ENCODE measurements at regions of chr1 and their contacts with region 1.

Region 1: DNA sequence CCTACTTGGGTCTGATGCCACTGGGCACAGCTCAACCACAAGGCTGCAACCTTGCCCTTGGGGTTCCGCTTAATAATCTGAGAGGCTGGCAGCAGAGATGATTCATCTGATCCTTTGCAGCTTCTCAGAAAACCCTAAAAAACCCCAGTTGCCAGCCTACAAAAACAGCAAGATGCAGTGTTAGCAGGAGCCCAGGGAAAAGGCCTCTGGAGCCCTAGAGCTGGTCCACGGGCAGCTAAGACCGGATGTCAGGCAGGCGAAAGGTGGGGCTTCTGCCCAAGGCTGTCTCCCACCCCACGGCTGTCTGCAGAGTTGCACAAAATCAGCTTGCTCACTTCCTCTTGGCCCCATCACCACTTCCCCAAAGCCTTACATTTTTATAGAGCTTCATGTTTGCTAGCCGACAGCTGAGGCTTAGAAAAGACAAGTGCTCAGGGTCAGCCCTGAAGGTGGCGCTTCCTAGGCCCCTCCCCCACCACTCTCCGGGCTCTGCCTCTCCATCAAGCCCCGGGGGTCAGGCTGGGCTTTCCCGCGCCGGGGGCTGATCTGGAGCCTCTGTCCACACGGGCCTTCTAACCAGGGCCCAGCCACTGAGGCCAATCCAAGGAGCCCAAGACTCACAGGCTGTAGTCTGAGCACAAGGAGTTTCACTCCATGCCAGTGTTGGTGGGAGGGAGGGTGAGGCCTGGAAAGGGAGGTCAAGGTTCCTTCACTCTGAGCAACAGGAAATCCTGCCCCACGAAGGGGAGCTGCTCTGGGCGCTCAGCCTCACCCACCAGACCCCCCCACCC is 4.2 kb upstream of the ADORA3 start:
- DNase-seq: peak; percentile 89
- ATAC-seq: peak; percentile 70
- H3K4me3 Mint-ChIP-seq: peak overlapping the region; percentile 67
- H3K27ac Mint-ChIP-seq: peak overlapping the region; percentile 94
- H3K4me1 Mint-ChIP-seq: peaks cover 58% of the 10 kb centered on the region
- H3K27me3 Mint-ChIP-seq: no peaks in the 10 kb centered on the region

Region 2: DNA sequence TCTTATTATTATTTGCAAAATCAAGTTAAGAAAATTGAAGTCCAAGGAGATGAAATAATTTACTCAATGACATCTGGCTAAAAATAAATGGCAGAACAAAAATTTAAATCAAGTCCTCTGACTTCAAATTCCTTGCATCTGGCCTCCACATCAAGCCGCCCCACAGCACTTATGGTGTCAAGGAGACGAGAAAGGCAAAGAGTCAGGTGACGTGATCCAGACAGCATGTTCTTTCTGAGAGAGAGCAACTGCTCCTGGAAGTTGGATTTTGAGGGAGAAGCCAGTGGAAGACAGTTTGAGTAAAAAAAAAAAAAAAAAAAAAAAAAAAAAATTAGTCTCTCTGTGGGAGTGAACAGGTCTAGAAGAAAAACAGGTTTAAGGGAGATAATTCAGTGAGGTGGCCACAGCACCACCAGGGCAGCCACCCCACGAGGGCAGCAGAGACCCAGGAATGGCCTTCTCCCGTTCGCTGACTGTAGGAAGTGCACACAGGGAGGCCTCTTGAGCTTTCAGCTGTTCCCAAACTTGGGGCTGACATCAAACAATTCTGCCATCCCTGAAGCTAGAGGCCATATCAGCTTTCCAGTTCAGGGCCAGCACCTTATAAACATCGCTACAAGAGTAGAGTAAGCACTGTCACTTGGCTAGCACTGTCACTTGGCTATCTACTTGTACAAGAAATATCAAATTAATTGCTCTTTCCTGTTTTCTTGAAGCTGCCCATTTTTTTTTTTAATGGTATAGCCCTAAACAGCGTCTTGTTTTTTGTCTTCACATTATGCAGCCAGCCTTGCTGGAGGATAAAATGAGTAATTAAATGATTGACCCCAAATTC is 26.0 kb before region 1 on chr1:
- CTCF ChIA-PET with region 1: interaction called, 39 read pairs
- DNase-seq: peak; percentile 73
- ATAC-seq: peak; percentile 74
- H3K4me3 Mint-ChIP-seq: no peak overlapping the region
- H3K27ac Mint-ChIP-seq: no peak overlapping the region
- H3K4me1 Mint-ChIP-seq: peaks cover 21% of the 10 kb centered on the region
- H3K27me3 Mint-ChIP-seq: peaks cover 35% of the 10 kb centered on the region

Region 3: DNA sequence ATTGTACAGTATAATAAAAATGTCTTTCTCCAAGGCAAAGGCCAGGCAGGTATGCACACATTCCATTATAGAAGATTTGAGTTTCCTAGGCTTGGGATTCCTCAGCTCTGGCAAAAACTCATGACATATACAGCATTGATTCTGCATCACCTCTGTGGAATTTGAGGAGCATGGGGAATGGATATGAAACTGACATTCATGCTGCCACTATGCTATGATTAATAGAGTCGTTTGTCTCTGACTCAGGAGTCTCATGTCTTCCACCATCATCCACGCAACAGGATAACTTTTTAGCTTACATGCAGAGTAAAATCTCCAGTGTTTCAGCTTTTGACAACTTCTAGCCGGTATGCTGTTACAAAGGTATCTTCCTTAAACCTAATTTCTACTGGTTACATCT is 45.6 kb after region 1 on chr1:
- CTCF ChIA-PET with region 1: no interaction called
- DNase-seq: no peak
- ATAC-seq: no peak
- H3K4me3 Mint-ChIP-seq: no peak overlapping the region
- H3K27ac Mint-ChIP-seq: no peak overlapping the region
- H3K4me1 Mint-ChIP-seq: no peaks in the 10 kb centered on the region
- H3K27me3 Mint-ChIP-seq: no peaks in the 10 kb centered on the region

Region 4: DNA sequence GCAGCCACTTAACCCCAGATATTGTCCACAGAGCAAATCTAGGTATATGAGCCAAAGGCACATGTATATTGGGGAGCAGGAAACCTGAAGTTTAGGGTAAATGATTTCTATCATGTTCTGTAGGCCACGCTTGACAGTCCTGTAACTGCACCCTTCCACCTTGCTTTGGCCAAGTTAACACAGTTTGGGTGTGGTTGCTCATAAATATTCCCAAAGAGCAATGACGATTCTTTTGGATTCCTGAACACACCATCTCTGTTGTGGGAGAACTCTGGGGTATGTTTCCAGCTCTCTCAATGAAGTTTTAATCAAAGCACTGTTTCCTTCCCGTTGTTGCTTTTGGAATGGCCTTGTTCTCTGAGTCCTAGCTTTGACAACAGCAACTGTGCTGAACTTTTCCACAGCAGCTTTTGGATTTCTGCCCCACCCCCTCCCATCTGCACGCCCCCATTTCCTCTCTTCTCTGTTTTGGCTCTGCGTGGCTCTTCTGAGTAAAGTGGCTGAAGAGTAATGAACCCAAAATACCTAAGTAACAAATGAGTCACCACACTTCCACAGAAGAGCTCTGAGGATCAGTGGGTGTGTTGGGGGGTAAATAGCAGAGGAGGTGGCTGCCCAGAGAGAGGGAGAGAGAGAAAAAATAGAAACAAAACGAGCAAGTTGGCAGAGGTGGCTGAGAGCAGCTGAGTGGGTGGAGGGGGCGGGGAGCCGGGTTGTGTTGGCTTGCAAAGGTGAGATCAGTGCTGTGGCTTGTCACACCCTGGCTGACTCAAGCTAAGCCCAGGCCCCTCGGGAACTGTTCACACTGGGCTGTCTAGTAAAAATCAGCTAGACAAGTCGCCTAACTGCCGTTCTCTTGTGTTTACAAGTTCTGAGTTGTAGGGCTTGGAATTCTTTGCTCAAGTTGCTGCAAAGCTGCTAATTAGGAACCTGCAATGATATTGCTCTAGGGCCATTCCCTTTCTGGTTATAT is 85.1 kb after region 1 on chr1:
- CTCF ChIA-PET with region 1: interaction called, 71 read pairs
- DNase-seq: peak; percentile 98
- ATAC-seq: peak; percentile 94
- H3K4me3 Mint-ChIP-seq: peak overlapping the region; percentile 58
- H3K27ac Mint-ChIP-seq: peak overlapping the region; percentile 96
- H3K4me1 Mint-ChIP-seq: peaks cover 75% of the 10 kb centered on the region
- H3K27me3 Mint-ChIP-seq: no peaks in the 10 kb centered on the region

Region 5: DNA sequence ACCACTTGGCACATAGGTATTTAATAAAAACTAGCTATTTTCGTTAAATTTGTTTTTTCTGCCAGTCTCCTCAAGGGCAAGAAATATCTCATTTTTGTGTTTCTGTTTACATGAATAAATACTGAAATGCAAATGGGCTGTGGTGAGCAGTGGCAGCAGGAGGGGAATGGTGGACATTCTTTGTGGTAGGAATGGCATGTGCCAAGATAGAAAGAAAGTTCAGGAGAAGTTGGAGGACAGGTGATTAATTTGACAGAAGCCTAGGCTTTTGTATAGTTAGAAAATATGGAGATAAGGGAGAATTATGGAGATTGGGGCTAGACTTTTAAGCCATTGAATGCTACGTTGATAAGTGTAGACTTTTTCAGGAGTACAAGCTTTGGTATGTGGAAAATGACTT is 120.5 kb after region 1 on chr1:
- CTCF ChIA-PET with region 1: interaction called, 101 read pairs
- DNase-seq: no peak
- ATAC-seq: no peak
- H3K4me3 Mint-ChIP-seq: peak overlapping the region; percentile 47
- H3K27ac Mint-ChIP-seq: peak overlapping the region; percentile 81
- H3K4me1 Mint-ChIP-seq: peaks cover 85% of the 10 kb centered on the region
- H3K27me3 Mint-ChIP-seq: no peaks in the 10 kb centered on the region

Region 6: DNA sequence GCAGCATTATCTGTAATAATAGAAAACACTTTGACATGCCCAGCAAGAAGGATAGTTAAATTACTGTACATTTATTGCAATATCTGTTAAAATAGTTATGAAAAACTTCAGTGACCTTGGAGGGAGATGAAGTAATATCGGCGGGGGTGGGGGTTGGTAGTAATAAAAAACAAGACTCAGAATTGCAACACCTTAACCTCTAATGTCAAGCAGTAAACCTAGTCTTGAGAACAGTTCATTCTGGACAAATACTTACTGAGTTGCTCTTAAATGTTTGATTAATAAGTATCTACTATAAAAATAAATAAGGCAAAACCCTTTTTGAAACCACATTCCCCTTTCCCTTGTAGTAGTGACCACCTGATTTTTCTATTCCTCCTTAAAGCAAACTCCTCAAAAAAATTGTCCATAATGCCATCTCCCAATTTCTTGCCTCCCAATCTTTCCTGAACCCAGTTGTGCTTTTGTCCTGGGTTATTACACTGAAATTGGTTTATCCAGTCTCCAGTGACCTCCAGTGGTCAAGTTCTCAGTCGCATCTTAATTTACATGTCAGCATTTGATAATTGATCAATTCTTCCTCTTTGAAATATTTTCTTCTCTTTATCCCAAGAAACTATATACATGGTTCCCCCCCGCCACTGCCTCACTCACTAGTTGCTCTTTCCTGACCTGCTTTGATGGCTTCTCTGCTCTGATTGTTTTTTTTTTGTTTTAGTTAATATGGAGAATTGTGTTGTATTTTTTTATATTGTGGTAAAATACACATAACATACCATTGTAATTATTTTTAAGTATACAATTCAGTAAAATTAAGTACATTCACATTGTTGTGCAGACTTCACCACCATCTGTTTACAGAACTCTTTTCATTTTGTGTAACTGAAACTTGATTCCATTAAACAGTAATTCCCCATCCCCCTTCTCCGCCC is 148.7 kb after region 1 on chr1:
- CTCF ChIA-PET with region 1: interaction called, 11 read pairs
- DNase-seq: no peak
- ATAC-seq: no peak
- H3K4me3 Mint-ChIP-seq: no peak overlapping the region
- H3K27ac Mint-ChIP-seq: peak overlapping the region; percentile 56
- H3K4me1 Mint-ChIP-seq: peaks cover 54% of the 10 kb centered on the region
- H3K27me3 Mint-ChIP-seq: no peaks in the 10 kb centered on the region

Region 7: GRCh38 chr1:111702504-111703050 is 195.0 kb after region 1 on chr1:
- CTCF ChIA-PET with region 1: interaction called, 10 read pairs
- DNase-seq: no peak
- ATAC-seq: no peak
- H3K4me3 Mint-ChIP-seq: no peak overlapping the region
- H3K27ac Mint-ChIP-seq: no peak overlapping the region
- H3K4me1 Mint-ChIP-seq: peaks cover 60% of the 10 kb centered on the region
- H3K27me3 Mint-ChIP-seq: no peaks in the 10 kb centered on the region

Region 8: GRCh38 chr1:111755331-111756123 is 247.9 kb after region 1 on chr1 and contains the start of gene DDX20:
- CTCF ChIA-PET with region 1: interaction called, 33 read pairs
- DNase-seq: peak; percentile 95
- ATAC-seq: peak; percentile 91
- H3K4me3 Mint-ChIP-seq: peak within 1 kb of the TSS; percentile 90
- H3K27ac Mint-ChIP-seq: peak within 1 kb of the TSS; percentile 95
- H3K4me1 Mint-ChIP-seq: peaks cover 43% of the 10 kb centered on the region
- H3K27me3 Mint-ChIP-seq: no peaks in the 10 kb centered on the region
- total RNA-seq, gene DDX20: 14.1 to 17.9 TPM